IMR-90 (cell line): ENCODE measurements at regions of chr2 and their contacts with region 1.

Region 1: DNA sequence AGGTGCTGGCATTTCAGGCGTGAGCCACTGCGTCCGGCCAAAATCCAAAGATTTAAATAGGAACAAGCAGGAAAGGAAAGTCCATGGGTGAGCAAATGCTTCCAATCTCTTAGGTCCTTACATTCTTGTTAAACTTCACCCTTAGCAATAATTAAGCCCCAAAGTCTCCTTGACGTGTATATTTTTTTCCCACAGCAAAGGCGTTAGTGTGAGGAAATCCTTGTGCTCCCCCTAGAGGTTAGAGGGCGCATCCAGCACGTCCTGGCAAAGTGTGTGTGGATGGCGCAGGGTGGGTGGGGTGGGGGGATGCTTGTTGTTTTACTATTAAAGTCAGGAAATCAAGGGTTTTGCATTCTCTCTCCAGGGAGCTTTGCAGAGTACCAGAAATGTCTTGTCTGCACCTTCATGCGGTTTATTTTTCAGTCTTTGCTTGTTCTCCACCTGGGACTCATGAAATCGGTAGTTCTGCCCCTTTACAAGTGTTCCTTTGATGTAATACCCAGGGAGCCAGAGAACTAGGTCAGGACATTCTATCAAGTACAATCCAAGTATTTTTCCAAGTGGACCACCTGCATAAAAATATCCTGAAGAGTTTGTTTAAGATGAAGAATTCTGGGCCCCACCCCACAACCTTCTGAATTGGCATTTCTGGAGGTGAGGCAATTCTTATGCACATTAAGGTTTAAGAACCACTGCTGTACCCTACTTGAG is 22.2 kb upstream of the ITSN2 start:
- DNase-seq: peak; percentile 65
- ATAC-seq: peak; percentile 96
- H3K4me3 ChIP-seq: no peak overlapping the region
- H3K27ac ChIP-seq: no peak overlapping the region
- H3K4me1 ChIP-seq: no peaks in the 10 kb centered on the region
- H3K27me3 ChIP-seq: no peaks in the 10 kb centered on the region
- CTCF ChIP-seq: peak; percentile 71
- POLR2A ChIP-seq: no peak
- RAD21 ChIP-seq: peak; percentile 79

Region 2: DNA sequence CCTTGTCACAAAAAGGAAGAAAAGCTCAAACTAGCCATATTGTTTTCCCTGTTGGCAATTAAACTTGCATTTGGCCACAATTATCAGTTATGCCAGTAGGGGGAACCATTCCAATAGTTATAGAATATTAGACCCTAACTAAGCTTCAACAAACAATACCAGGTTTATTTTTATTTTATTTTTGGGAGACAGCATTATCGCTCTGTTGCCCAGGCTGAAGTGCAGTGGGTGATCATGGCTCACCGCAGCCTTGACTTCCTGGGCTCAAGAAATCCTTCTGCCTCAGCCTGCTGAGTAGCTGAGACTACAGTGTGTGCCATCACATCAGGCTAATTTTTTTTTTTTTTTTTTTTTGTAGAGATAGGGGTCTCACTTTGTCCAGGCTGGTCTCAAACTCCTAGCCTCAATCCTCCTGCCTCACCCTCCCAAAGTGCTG is 557.7 kb before region 1 on chr2:
- CTCF ChIA-PET with region 1: no interaction called
- POLR2A ChIA-PET with region 1: no interaction called
- dilution Hi-C with region 1: no loop called
- in situ Hi-C with region 1: no loop called
- intact Hi-C with region 1: loop called (anchors 1 kb)
- DNase-seq: peak; percentile 62
- ATAC-seq: peak; percentile 76
- H3K4me3 ChIP-seq: no peak overlapping the region
- H3K27ac ChIP-seq: no peak overlapping the region
- H3K4me1 ChIP-seq: no peaks in the 10 kb centered on the region
- H3K27me3 ChIP-seq: no peaks in the 10 kb centered on the region
- CTCF ChIP-seq: peak; percentile 72
- POLR2A ChIP-seq: no peak
- RAD21 ChIP-seq: peak; percentile 69

Region 3: GRCh38 chr2:24084386-24085361 is 297.8 kb before region 1 on chr2 and contains the start of gene TP53I3:
- CTCF ChIA-PET with region 1: no interaction called
- POLR2A ChIA-PET with region 1: no interaction called
- dilution Hi-C with region 1: no loop called
- in situ Hi-C with region 1: no loop called
- intact Hi-C with region 1: loop called (anchors 1 kb)
- DNase-seq: peak; percentile 84
- ATAC-seq: peak; percentile 93
- H3K4me3 ChIP-seq: peak within 1 kb of the TSS; percentile 70
- H3K27ac ChIP-seq: peak within 1 kb of the TSS; percentile 89
- H3K4me1 ChIP-seq: peaks cover 4% of the 10 kb centered on the region; the same call in 1 of the 2 replicates
- H3K27me3 ChIP-seq: no peaks in the 10 kb centered on the region
- CTCF ChIP-seq: peak; percentile 91
- POLR2A ChIP-seq: peak; percentile 71
- RAD21 ChIP-seq: peak; percentile 79
- total RNA-seq, gene TP53I3: 25.5 and 26.9 TPM in 2 replicates

Region 4: GRCh38 chr2:24238158-24238557 is 144.4 kb before region 1 on chr2:
- CTCF ChIA-PET with region 1: interaction called, 6 read pairs
- POLR2A ChIA-PET with region 1: no interaction called
- dilution Hi-C with region 1: no loop called
- in situ Hi-C with region 1: no loop called
- intact Hi-C with region 1: loop called (anchors 5 kb)
- DNase-seq: no peak
- ATAC-seq: no peak
- H3K4me3 ChIP-seq: no peak overlapping the region
- H3K27ac ChIP-seq: no peak overlapping the region
- H3K4me1 ChIP-seq: no peaks in the 10 kb centered on the region
- H3K27me3 ChIP-seq: no peaks in the 10 kb centered on the region
- CTCF ChIP-seq: no peak
- POLR2A ChIP-seq: no peak
- RAD21 ChIP-seq: no peak

Region 5: DNA sequence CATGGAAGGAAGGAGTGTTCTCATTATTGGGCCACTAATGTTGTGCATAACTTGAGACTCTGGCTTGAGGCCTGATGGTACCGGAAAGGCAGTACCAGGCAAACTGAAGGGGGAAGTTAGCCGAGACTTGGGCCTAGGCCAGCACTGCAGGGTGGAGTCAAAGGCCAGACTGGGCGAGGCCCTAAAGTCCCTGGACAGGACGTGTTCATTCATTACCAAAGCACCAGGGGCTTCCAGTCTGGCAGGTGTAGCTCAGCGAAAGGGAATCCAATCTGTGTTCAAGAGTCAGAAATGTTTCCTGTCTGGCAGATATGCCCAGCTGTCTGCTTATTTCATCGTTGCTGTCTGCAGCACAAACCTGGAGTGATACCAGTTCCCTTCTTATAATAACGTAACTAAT is 17.5 kb before region 1 on chr2:
- CTCF ChIA-PET with region 1: interaction called, 12 read pairs
- POLR2A ChIA-PET with region 1: no interaction called
- dilution Hi-C with region 1: no loop called
- in situ Hi-C with region 1: no loop called
- intact Hi-C with region 1: no loop called
- DNase-seq: no peak
- ATAC-seq: no peak
- H3K4me3 ChIP-seq: no peak overlapping the region
- H3K27ac ChIP-seq: no peak overlapping the region
- H3K4me1 ChIP-seq: no peaks in the 10 kb centered on the region
- H3K27me3 ChIP-seq: no peaks in the 10 kb centered on the region; the same call in 1 of the 2 replicates
- CTCF ChIP-seq: no peak
- POLR2A ChIP-seq: no peak
- RAD21 ChIP-seq: no peak